ENCODE measurements at regions of chr18 and their contacts with region 1.

Region 1: GRCh38 chr18:78788161-78788560 is 191.5 kb upstream of the SALL3 start:
- DNase-seq: no peak
- H3K4me3 ChIP-seq: no peak overlapping the region
- H3K27ac ChIP-seq: no peak overlapping the region
- H3K4me1 ChIP-seq: no peaks in the 10 kb centered on the region
- H3K27me3 ChIP-seq: peaks cover 0 to 27% of the 10 kb centered on the region in 2 donors
- CTCF ChIP-seq: no peak
- POLR2A ChIP-seq: no peak

Region 2: GRCh38 chr18:78304192-78305164 is 483.7 kb before region 1 on chr18:
- intact Hi-C with region 1: no loop called
- DNase-seq: no peak
- H3K4me3 ChIP-seq: no peak overlapping the region
- H3K27ac ChIP-seq: no peak overlapping the region
- H3K4me1 ChIP-seq: no peaks in the 10 kb centered on the region
- H3K27me3 ChIP-seq: peaks cover 0 to 35% of the 10 kb centered on the region in 2 donors
- CTCF ChIP-seq: no peak
- POLR2A ChIP-seq: no peak

Region 3: DNA sequence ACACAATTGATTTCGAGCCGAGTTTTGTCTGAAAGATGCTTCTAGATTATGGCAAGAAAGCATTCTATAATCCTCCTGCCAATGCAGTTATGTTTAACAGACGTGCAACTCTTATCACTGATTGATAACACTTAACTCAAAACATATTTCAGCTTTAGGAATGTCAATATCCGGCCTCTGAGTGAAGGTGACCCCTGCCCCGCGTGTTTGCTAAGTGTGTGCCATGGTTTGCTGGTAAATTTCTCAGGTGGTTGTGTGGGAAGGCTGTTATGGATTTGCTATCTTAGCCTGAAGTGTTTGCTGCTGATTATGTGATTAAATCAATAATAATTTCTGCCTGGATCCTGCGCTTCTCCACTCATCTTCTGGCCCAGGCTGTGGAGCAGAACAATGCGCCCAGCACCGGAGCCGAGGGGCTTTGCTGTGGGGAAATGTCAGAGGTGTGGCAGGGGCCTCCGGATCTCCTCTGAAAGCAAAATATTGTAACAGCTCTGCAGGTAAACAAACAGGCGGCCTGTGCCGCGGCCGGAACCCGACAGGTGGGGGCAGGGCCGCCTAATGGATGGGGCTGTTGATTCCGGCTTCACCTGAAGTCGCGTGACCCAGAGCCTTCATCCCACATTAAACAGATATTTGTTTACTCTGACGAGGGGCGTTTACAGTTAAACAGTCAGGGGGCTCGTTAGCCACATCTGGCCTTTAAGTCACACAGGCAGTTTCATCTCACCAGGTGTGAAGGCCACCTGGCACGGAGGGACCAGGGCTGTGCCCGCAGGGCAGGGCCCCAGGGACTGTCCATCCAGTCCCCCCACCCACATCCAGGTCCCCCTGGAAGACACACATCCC is 19.3 kb before region 1 on chr18:
- intact Hi-C with region 1: loop called (anchors 1 kb)
- DNase-seq: peak in 1 of 2 donors; percentile 12
- H3K4me3 ChIP-seq: no peak overlapping the region
- H3K27ac ChIP-seq: no peak overlapping the region
- H3K4me1 ChIP-seq: no peaks in the 10 kb centered on the region
- H3K27me3 ChIP-seq: peaks cover 0 to 56% of the 10 kb centered on the region in 2 donors
- CTCF ChIP-seq: no peak
- POLR2A ChIP-seq: no peak